PC-3 (cell line): ENCODE measurements at regions of chr6 and their contacts with region 1.

Region 1: GRCh38 chr6:26383624-26384417 is 913 bp downstream of the BTN2A2 start:
- DNase-seq: peak; percentile 59
- ATAC-seq: peak; percentile 51
- H3K4me3 ChIP-seq: peak overlapping the region; percentile 70
- H3K27ac ChIP-seq: peak overlapping the region; percentile 37
- H3K4me1 ChIP-seq: peaks cover 15% of the 10 kb centered on the region
- H3K27me3 ChIP-seq: no peaks in the 10 kb centered on the region
- CTCF ChIP-seq: no peak

Region 2: DNA sequence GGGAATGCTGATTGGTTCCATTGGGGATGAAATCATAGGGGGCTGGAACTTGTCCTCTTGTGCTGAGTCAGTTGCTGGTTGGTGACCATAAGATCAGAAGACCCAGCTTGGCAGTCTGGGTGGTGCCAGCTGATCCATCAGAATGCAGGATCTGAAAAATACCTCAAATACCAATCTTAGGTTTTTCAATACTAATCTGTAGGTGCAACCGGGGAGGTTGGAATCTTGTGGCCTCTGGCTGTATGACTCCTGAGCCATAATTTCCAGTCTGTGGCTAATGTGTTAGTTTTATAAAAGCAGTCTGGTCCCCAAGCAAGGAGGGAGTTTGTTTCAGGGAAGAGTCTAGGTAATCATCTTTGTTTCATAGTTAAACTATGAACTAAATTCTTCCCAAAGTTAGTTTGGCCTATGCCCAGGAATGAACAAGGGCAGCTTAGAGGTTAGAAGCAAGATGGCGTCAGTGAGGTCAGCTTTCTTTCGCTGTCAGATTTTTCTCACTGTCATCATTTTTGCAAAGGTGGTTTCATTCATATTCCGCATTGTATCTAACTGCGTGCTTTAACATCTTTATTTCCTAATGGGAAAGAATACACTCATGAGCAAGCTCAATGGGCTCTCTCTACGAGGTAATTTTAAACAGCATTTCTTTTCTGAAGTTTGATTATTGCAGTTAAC is 1587.1 kb before region 1 on chr6:
- CTCF ChIA-PET with region 1: no interaction called
- POLR2A ChIA-PET with region 1: no interaction called
- intact Hi-C with region 1: no loop called
- DNase-seq: no peak
- ATAC-seq: no peak
- H3K4me3 ChIP-seq: no peak overlapping the region
- H3K27ac ChIP-seq: no peak overlapping the region
- H3K4me1 ChIP-seq: no peaks in the 10 kb centered on the region
- H3K27me3 ChIP-seq: no peaks in the 10 kb centered on the region
- CTCF ChIP-seq: no peak

Region 3: DNA sequence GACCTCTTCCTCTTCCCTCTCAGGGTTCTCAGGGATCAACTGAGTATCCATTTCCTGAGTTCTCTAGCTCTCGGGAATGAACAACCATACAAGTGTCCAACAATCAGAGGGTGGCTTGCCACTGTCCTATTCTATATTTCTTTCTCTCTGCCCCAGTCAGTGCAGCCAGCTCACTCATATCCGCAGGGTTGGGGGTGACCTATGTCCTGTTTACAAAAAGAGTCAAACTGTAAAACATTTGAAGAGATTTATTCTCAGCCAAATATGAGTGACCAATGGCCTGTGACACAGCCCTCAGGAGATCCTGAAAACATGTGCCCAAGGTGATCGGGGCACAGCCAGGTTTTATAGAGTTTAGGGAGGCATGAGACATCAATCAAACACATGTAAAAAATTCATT is 29.7 kb before region 1 on chr6:
- CTCF ChIA-PET with region 1: no interaction called
- POLR2A ChIA-PET with region 1: interaction called, 12 read pairs
- intact Hi-C with region 1: no loop called
- DNase-seq: peak; percentile 65
- ATAC-seq: peak; percentile 53
- H3K4me3 ChIP-seq: no peak overlapping the region
- H3K27ac ChIP-seq: peak overlapping the region; percentile 55
- H3K4me1 ChIP-seq: peaks cover 36% of the 10 kb centered on the region
- H3K27me3 ChIP-seq: no peaks in the 10 kb centered on the region
- CTCF ChIP-seq: no peak

Region 4: GRCh38 chr6:26445934-26446667 is 62.3 kb after region 1 on chr6:
- CTCF ChIA-PET with region 1: no interaction called
- POLR2A ChIA-PET with region 1: no interaction called
- intact Hi-C with region 1: no loop called
- DNase-seq: no peak
- ATAC-seq: no peak
- H3K4me3 ChIP-seq: no peak overlapping the region
- H3K27ac ChIP-seq: no peak overlapping the region
- H3K4me1 ChIP-seq: peaks cover 4% of the 10 kb centered on the region
- H3K27me3 ChIP-seq: no peaks in the 10 kb centered on the region
- CTCF ChIP-seq: no peak

Region 5: DNA sequence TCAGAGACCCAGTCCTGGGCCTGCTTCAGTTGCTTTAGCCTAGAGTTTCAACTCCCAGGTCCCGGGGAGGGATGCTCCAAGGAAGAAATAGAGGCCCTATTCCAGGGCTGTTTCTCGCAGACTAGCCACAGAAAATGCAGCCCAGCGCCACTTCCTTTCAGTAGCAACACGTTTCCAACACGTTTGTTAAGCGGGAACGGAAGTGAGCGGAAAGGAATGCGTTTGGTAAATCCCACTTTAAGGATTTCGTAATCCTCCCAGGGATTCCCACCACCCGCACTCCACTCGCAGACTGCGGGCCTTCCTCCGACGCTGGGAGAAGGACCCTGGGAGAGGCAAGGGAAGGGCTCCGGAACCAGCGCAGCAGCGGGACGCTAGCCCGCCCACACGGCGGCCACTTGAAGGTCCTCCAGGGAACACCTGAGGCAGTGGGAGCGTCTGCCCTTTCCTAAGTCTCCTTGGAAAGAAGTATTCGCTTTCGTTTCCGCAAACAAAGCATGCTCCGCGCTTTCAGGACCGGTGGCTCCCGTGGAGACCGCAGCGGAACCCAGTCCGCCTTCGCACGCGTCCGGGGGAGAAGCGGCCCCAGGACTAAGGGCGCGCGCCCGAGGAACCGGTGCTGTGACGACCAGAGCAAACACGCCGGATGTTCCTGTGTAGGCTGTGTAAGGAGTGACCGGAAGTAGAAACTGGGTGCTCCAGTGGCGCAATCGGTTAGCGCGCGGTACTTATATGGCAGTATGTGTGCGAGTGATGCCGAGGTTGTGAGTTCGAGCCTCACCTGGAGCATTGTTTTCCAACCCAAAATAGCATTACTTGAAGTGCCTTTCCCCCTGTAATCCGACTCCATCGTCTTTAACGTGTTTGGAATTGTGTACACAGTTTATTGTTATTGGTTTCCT is 636.1 kb after region 1 on chr6:
- CTCF ChIA-PET with region 1: no interaction called
- POLR2A ChIA-PET with region 1: no interaction called
- intact Hi-C with region 1: no loop called
- DNase-seq: peak; percentile 93
- ATAC-seq: peak; percentile 92
- H3K4me3 ChIP-seq: peak overlapping the region; percentile 78
- H3K27ac ChIP-seq: peak overlapping the region; percentile 93
- H3K4me1 ChIP-seq: peaks cover 19% of the 10 kb centered on the region
- H3K27me3 ChIP-seq: no peaks in the 10 kb centered on the region
- CTCF ChIP-seq: no peak